ENCODE measurements at regions of chr6 and their contacts with region 1.

Region 1: DNA sequence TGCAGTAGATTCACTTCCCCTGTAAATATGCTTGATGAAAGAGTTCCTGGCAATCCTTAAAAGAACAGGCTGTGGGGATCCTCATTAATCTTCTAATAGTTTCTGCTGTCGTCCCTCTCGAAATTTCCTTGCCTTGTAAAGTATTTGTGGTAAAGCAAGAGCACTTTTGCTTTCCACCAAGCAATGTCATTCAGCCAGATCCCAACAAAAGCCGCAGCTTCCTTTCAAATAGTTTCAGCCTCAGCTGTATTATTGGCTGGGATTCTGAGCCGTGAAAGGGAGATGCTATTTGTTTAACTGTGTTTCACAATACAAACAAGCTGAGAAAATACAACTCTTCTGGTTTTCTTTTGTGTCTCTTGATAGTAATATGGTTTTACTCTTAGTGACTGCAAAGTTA is 48.9 kb upstream of the EPHA7 start:
- DNase-seq: peak; percentile 62
- ATAC-seq: peak; percentile 49
- H3K4me3 ChIP-seq: no peak overlapping the region
- H3K27ac ChIP-seq: peak overlapping the region; percentile 40
- H3K4me1 ChIP-seq: peaks cover 9% of the 10 kb centered on the region; the same call in 1 of the 2 replicates
- H3K27me3 ChIP-seq: no peaks in the 10 kb centered on the region
- CTCF ChIP-seq: no peak

Region 2: DNA sequence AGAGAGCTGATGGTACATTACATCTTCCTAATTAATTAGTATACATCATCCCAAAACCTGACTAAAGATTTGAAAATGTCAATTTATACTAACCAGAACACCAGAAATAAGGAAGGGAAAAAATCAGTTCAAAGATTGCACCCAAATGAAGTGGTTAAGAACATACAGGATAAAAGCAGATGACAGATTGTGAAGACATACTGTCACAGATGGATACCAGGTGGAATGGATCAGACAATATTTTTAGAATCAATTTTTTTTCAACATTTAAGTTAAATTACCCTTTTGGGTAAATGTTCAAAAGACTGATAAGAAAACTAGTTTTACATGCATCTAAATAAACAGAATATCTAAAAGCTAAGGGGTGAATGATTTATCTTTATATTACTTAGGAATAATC is 96.5 kb before region 1 on chr6:
- CTCF ChIA-PET with region 1: no interaction called
- POLR2A ChIA-PET with region 1: no interaction called
- intact Hi-C with region 1: no loop called
- DNase-seq: no peak
- ATAC-seq: no peak
- H3K4me3 ChIP-seq: no peak overlapping the region
- H3K27ac ChIP-seq: no peak overlapping the region
- H3K4me1 ChIP-seq: no peaks in the 10 kb centered on the region
- H3K27me3 ChIP-seq: no peaks in the 10 kb centered on the region
- CTCF ChIP-seq: no peak

Region 3: GRCh38 chr6:93581371-93581770 is 113.1 kb after region 1 on chr6:
- CTCF ChIA-PET with region 1: no interaction called
- POLR2A ChIA-PET with region 1: no interaction called
- intact Hi-C with region 1: loop called (anchors 10 kb)
- DNase-seq: no peak
- ATAC-seq: no peak
- H3K4me3 ChIP-seq: no peak overlapping the region
- H3K27ac ChIP-seq: no peak overlapping the region
- H3K4me1 ChIP-seq: no peaks in the 10 kb centered on the region
- H3K27me3 ChIP-seq: no peaks in the 10 kb centered on the region
- CTCF ChIP-seq: no peak

Region 4: GRCh38 chr6:94052754-94053153 is 584.5 kb after region 1 on chr6:
- CTCF ChIA-PET with region 1: interaction called, 13 read pairs
- POLR2A ChIA-PET with region 1: no interaction called
- intact Hi-C with region 1: no loop called
- DNase-seq: peak; percentile 13
- ATAC-seq: peak; percentile 76
- H3K4me3 ChIP-seq: no peak overlapping the region
- H3K27ac ChIP-seq: no peak overlapping the region
- H3K4me1 ChIP-seq: no peaks in the 10 kb centered on the region
- H3K27me3 ChIP-seq: no peaks in the 10 kb centered on the region
- CTCF ChIP-seq: peak; percentile 38

Measured in PC-3 (cell line).